Dorsolateral prefrontal cortex (tissue), 120 donors: ENCODE measurements at regions of chr11 and their contacts with region 1.

Region 1: DNA sequence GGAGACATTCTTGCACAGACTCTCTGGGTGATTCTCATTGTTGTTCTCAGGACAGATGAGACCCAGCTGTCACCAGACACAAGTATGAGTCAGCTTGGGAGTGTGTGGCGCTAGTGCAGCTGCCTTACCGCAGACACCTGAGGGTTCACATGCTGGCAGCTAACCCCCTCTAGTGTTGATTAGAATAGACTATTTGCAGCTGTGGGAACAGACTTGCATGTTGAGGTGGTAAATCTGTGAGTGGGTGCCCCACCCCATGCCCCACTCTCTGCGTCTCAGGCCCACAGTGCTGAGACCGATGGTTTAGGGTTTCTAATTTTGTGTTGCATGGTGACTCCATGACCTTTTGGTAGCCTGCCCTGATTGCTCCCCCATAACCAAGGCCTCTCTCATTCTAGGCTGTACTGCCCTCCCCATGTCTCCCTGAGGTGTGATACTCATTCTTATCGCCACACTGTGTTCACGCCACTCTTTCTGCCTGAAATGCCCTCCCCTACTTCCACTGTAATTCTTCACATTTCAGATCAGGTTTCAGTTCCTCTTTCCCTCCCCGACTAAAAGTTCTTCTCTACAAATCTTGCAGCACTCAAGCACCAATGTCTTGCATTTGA is 73.7 kb upstream of the KIRREL3 start:
- DNase-seq: peak in 7 of 10 donors; percentile 42 to 82 (median 57)
- H3K4me3 ChIP-seq: no peak overlapping the region
- H3K27ac ChIP-seq: peak overlapping the region in 1 of 59 donors; percentile 9
- H3K27me3 ChIP-seq: peaks cover 0 to 4% (median 0%) of the 10 kb centered on the region in 45 donors
- CTCF ChIP-seq: peak in 53 of 56 donors; percentile 11 to 66 (median 39)

Region 2: GRCh38 chr11:126592496-126593410 is 481.5 kb before region 1 on chr11:
- intact Hi-C with region 1: loop called in 1 of 2 experiments (anchors 10 kb)
- DNase-seq: no peak
- H3K4me3 ChIP-seq: no peak overlapping the region
- H3K27ac ChIP-seq: no peak overlapping the region
- H3K27me3 ChIP-seq: no peaks in the 10 kb centered on the region
- CTCF ChIP-seq: no peak